MCF 10A (cell line): ENCODE measurements at regions of chr19 and their contacts with region 1.

Region 1: GRCh38 chr19:47745010-47745901 is at the start of gene NOP53:
- DNase-seq: peak; percentile 98
- H3K4me3 Mint-ChIP-seq: peak within 1 kb of the TSS; percentile 89
- H3K27ac Mint-ChIP-seq: peak within 1 kb of the TSS; percentile 97
- H3K4me1 Mint-ChIP-seq: no peaks in the 10 kb centered on the region
- H3K27me3 Mint-ChIP-seq: no peaks in the 10 kb centered on the region
- CTCF ChIP-seq: no peak
- total RNA-seq, gene NOP53: 165 and 211 TPM in 2 replicates

Region 2: DNA sequence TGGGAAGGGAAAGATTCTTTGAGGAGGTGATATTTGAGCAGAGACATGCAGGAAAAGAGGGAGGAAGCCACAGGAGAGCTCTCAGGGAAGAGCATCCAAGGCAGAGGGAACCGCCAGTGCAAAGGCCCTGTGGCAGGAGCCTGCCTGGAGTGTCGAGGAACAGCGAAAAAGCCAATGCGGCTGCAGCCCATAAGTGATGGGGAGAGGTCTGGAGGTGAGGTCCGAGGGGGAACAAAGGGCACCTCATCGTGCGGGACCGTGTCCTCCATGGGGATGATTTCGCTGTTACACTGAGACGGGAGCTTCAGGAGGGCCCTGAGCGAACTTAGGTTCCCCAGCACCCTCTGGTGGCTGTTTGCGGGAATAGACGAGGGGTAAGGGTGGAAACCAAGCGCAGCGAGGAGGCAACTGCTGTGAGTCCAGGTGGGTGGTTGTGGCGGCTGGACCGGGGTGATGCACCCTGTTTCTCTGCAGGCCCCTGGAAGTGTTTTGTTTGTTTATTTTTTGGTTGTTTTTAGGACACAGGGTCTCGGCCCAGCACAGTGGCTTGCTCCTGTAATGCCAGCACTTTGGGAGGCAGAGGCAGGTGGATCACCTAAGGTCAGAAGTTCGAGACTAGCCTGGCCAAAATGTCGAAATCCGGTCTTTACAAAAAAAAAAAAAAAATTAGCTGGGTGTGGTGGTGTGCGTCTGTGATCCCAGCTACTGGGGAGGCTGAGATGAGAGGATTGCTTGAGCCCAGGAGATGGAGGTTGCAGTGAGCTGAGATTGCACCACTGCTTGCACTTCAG is 37.9 kb before region 1 on chr19:
- CTCF ChIA-PET with region 1: interaction called, 78 read pairs
- POLR2A ChIA-PET with region 1: interaction called, 259 read pairs
- intact Hi-C with region 1: no loop called
- DNase-seq: peak; percentile 88
- H3K4me3 Mint-ChIP-seq: no peak overlapping the region
- H3K27ac Mint-ChIP-seq: no peak overlapping the region
- H3K4me1 Mint-ChIP-seq: no peaks in the 10 kb centered on the region
- H3K27me3 Mint-ChIP-seq: no peaks in the 10 kb centered on the region
- CTCF ChIP-seq: peak; percentile 77

Region 3: GRCh38 chr19:47713046-47714021 is 31.9 kb before region 1 on chr19 and contains the start of gene EHD2:
- CTCF ChIA-PET with region 1: interaction called, 78 read pairs
- POLR2A ChIA-PET with region 1: interaction called, 259 read pairs
- intact Hi-C with region 1: loop called (anchors 1 kb)
- DNase-seq: peak; percentile 81
- H3K4me3 Mint-ChIP-seq: peak within 1 kb of the TSS; percentile 90
- H3K27ac Mint-ChIP-seq: peak within 1 kb of the TSS; percentile 62
- H3K4me1 Mint-ChIP-seq: peaks cover 24% of the 10 kb centered on the region
- H3K27me3 Mint-ChIP-seq: no peaks in the 10 kb centered on the region
- CTCF ChIP-seq: peak; percentile 97
- total RNA-seq, gene EHD2: 88.8 and 104 TPM in 2 replicates

Region 4: DNA sequence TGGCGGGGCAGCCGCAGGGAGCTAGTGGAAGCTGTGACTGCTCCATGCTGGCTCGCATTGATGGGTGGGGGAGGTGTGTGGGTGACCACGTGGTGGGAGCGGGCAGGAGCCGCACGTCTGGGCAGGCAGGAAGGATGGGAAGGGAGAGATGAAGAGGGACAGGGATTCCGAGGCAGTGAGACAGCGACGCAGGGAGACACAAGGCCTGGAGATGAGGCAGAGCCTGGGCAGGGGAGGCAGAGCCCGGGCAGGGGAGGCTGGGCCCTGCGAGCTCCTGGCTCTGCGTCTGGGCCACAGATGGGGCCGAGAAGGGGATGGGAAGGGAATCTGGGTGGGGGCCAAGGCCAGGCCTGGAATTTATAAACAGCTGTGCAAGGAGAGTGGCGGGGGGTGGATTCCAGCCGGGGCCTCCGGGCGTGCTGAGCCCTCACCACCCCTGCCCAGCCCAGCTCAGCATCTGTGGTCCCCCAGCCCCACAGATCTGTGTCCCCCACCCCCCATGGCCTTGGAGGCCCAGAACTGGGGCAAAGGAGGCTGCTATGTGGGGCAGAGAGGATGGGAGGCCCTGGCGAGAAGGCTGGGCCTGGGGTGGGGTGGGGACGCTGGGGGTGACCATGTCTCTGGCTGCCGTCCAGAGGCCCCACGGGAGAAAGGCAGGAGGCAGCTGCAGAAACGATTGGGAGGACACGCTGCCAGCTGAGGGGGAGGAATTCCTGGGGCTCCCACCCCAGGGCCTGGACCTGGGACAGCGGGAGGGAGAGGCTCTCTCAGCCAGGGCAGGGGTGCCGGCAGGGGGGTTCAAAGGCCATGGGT is 26.0 kb before region 1 on chr19:
- CTCF ChIA-PET with region 1: interaction called, 78 read pairs
- POLR2A ChIA-PET with region 1: interaction called, 259 read pairs
- intact Hi-C with region 1: loop called (anchors 1 kb)
- DNase-seq: peak; percentile 89
- H3K4me3 Mint-ChIP-seq: peak overlapping the region; percentile 63
- H3K27ac Mint-ChIP-seq: peak overlapping the region; percentile 77
- H3K4me1 Mint-ChIP-seq: peaks cover 50% of the 10 kb centered on the region
- H3K27me3 Mint-ChIP-seq: no peaks in the 10 kb centered on the region
- CTCF ChIP-seq: no peak

Region 5: DNA sequence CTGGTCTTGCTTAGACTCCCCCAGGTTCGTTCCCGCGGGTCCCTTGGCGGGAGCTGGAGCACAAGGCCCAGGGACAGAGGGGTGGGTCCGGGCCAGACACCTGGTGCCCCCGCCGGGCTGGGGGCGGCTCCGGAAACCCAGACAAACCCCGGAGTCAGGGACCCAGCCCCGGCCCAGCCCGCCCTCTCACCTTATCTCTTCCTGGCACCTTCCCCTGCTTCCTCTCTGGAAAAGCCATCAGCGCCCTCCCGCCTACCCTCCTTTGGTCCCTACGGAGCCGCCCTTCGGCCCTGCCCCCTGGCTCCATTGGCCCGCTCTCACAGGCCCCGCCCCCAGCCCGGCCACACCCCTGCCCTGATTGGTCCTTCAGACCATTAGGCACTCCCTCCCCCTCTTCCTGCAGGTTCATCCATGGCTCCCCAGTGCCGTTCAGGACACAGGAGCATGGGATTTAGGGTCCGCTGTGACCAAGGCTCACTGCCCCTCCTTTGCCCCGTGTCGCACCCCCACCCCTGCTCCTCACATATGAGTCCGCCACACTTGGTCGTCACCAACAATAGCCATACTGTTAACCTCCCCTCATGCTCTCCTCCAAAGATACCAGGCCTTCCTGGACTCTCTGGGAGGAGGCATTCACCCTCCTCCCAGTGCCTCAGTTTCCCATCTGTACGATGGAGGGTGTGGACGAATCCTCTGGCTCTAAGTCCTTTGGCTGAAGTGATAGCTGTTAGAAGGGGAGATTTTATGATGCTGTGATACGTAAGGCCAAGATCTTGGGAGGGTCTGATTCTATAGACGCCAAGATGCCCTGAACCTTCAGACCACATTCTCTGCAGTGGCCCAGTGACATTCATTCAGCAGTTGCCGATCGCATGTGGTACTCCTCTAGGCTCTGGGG is 15.0 kb before region 1 on chr19:
- CTCF ChIA-PET with region 1: interaction called, 3 read pairs
- POLR2A ChIA-PET with region 1: interaction called, 207 read pairs
- intact Hi-C with region 1: loop called (anchors 2 kb)
- DNase-seq: peak; percentile 76
- H3K4me3 Mint-ChIP-seq: peak overlapping the region; percentile 76
- H3K27ac Mint-ChIP-seq: peak overlapping the region; percentile 83
- H3K4me1 Mint-ChIP-seq: peaks cover 43% of the 10 kb centered on the region
- H3K27me3 Mint-ChIP-seq: no peaks in the 10 kb centered on the region
- CTCF ChIP-seq: no peak